A673 (cell line): ENCODE measurements at regions of chr2 and their contacts with region 1.

Region 1: DNA sequence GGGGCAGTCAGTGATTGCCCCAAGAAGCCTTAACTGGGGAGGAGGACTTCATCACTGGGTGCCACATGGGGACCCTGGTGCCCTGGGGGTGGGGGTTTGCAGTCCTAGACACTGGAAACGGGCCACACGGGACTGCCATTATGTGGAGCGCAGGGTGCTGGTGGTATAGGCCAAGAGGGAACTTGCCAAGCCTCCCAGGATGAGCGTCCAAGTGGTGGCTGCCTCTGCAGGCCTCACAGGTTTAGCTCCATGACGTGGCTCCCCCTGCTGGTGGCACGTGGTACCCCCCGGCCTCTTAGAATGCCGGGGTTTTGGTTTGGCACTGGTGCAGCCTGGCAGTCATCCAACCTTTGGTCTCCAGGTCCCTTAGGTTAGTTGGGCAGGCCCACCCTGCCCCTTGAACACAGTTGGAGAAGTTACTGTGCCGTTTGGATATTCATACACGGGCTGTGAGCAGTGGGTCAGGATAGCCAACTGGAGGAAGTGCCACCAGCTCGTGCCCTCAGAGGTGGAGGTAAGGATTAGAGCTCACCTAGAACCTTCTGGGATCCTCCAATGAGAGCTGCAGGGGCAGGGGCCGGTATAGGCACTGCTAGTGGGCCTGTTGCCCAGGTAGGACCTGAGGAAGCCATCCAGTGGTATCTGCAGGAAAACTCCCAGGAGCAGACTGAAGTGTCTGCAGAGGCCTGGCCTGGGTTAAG is 5.6 kb downstream of the PTMA start:
- DNase-seq: peak; percentile 95
- H3K4me3 ChIP-seq: no peak overlapping the region
- H3K27ac ChIP-seq: peak overlapping the region; percentile 20
- H3K4me1 ChIP-seq: peaks cover 25% of the 10 kb centered on the region
- H3K27me3 ChIP-seq: no peaks in the 10 kb centered on the region
- CTCF ChIP-seq: peak; percentile 94

Region 2: GRCh38 chr2:231029563-231029962 is 684.3 kb before region 1 on chr2:
- CTCF ChIA-PET with region 1: no interaction called
- POLR2A ChIA-PET with region 1: no interaction called
- intact Hi-C with region 1: no loop called
- DNase-seq: no peak
- H3K4me3 ChIP-seq: no peak overlapping the region
- H3K27ac ChIP-seq: no peak overlapping the region
- H3K4me1 ChIP-seq: no peaks in the 10 kb centered on the region
- H3K27me3 ChIP-seq: peaks cover 17% of the 10 kb centered on the region
- CTCF ChIP-seq: no peak

Region 3: DNA sequence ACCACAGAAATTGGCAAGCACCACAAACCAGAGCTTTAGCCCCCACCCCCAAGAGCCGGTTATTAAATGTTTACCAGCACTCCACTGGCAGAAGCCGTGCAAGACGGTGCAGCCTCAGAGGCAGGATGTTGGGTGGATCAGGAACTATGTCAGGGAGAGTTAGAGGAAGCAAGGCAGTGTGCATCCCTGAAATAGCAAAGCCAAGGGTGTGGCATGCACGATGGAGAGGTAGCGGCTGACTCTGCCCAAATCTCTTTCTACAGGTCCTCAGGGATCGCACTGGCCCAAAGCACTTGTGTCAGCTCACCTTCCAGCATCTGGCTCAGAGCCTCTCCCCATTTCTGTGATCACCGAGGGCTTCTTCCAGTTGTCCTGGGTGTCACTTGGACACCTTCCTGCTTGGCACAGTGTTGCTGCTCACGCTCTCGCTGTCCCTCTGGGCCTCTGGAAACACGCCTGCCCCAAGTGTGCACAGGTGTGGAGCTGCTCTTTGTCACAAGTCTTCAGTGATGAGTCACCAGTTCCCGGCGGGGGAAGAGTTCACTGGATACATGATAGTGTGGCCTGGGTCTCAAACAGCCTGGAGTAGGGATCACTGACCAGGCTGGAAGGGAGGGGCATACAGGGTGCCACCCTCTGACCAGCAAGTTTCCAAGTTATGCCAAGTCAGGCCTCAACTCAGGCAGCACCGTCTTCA is 335.7 kb before region 1 on chr2:
- CTCF ChIA-PET with region 1: no interaction called
- POLR2A ChIA-PET with region 1: no interaction called
- intact Hi-C with region 1: no loop called
- DNase-seq: no peak
- H3K4me3 ChIP-seq: no peak overlapping the region
- H3K27ac ChIP-seq: no peak overlapping the region
- H3K4me1 ChIP-seq: no peaks in the 10 kb centered on the region
- H3K27me3 ChIP-seq: no peaks in the 10 kb centered on the region
- CTCF ChIP-seq: no peak

Region 4: GRCh38 chr2:231780909-231781797 is 67.3 kb after region 1 on chr2 and contains the start of gene PDE6D:
- CTCF ChIA-PET with region 1: interaction called, 4 read pairs
- POLR2A ChIA-PET with region 1: no interaction called
- intact Hi-C with region 1: loop called (anchors 5 kb)
- DNase-seq: peak; percentile 99
- H3K4me3 ChIP-seq: peak within 1 kb of the TSS; percentile 78
- H3K27ac ChIP-seq: peak within 1 kb of the TSS; percentile 78
- H3K4me1 ChIP-seq: peaks cover 10% of the 10 kb centered on the region
- H3K27me3 ChIP-seq: no peaks in the 10 kb centered on the region
- CTCF ChIP-seq: no peak
- total RNA-seq, gene PDE6D: 19.7 and 27.3 TPM in 2 replicates